ENCODE measurements at regions of chr17 and their contacts with region 1.

Region 1: GRCh38 chr17:78725448-78726021 is 56.5 kb downstream of the CYTH1 start:
- DNase-seq: peak; percentile 73
- H3K4me3 Mint-ChIP-seq: peak overlapping the region; percentile 65
- H3K27ac Mint-ChIP-seq: peak overlapping the region; percentile 86
- H3K4me1 Mint-ChIP-seq: peaks cover 75% of the 10 kb centered on the region
- H3K27me3 Mint-ChIP-seq: no peaks in the 10 kb centered on the region

Region 2: GRCh38 chr17:78736526-78737079 is 11.1 kb after region 1 on chr17:
- intact Hi-C with region 1: loop called (anchors 1 kb)
- DNase-seq: peak; percentile 91
- H3K4me3 Mint-ChIP-seq: peak overlapping the region; percentile 88
- H3K27ac Mint-ChIP-seq: peak overlapping the region; percentile 90
- H3K4me1 Mint-ChIP-seq: peaks cover 80% of the 10 kb centered on the region
- H3K27me3 Mint-ChIP-seq: no peaks in the 10 kb centered on the region